Activated CD4-positive, alpha-beta T cell treated with anti-CD3 and anti-CD28 coated beads, Interleukin-2, amount 10 ng/mL, durations not matched to agents 24 days and 14 days (primary cell): ENCODE measurements at regions of chr11 and their contacts with region 1.

Region 1: GRCh38 chr11:126355324-126355925 is at the start of gene ST3GAL4:
- DNase-seq: peak; percentile 91
- H3K4me3 Mint-ChIP-seq: peak within 1 kb of the TSS; percentile 96
- H3K27ac Mint-ChIP-seq: peak within 1 kb of the TSS; percentile 93
- H3K4me1 Mint-ChIP-seq: peaks cover 35% of the 10 kb centered on the region
- H3K27me3 Mint-ChIP-seq: no peaks in the 10 kb centered on the region
- total RNA-seq, gene ST3GAL4: 12.3 and 13.3 TPM in 2 replicates

Region 2: DNA sequence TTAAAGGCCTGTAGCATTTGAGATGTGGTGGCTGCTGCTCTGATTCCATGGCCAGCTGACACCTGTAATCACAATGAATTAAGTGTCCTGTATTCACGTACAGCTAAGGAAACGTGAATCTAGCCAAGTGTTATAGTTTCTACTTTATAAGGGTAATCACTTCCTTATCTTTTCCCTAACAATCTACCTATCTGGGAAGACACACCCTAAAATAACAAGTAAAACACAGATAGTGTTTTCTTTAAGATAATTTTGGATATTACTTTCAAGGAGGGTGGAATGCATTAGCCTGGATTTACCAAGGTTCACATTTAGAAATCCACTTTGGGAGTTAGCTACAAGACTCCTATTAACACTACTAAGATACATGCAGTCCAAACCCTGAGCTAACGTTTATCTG is 304.3 kb before region 1 on chr11:
- intact Hi-C with region 1: no loop called
- DNase-seq: no peak
- H3K4me3 Mint-ChIP-seq: no peak overlapping the region
- H3K27ac Mint-ChIP-seq: no peak overlapping the region
- H3K4me1 Mint-ChIP-seq: no peaks in the 10 kb centered on the region
- H3K27me3 Mint-ChIP-seq: peaks cover 11% of the 10 kb centered on the region

Region 3: DNA sequence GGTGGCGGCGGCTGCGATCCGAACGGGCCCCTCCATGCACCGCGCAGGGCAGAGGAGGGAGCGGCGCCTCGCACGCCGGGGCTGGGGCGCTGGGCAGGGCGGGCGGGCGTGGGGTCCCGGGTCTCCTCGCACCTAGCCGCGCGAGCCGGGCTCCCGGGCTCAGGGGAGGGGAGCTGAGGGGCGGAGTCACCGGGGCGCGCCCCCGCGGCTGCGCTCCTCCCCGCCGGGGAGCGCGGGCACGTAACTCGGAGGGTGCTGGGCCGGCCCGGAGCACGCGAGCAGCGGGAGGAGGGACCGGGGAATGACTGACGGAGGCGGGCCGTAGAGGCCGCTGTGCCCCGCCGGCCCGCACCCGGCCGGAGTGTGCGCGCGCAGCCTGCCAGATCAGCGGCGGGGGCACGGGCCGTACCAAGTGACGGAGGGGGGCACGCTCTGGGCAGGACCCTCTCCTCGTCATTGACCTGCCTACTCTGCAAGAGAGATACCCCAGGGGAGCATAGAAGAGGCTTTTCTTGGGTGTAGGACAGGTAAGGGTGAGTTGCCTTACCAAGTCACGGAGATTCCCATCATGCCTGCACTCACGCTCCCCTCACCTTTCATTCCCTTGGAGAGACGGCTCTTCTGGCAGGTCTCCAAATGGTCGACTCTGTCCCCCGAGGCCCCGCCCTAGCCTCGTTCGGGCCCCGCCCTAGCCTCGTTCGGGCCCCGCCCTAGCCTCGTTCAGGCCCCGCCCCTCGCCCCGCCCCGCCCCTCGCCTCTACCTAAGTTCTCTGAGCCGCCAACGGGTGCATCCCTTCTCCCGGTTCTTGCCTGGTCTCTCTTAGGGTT is 292.5 kb before region 1 on chr11 and contains the start of gene CDON:
- intact Hi-C with region 1: loop called (anchors 2 kb)
- DNase-seq: peak; percentile 98
- H3K4me3 Mint-ChIP-seq: peak within 1 kb of the TSS; percentile 80
- H3K27ac Mint-ChIP-seq: peak within 1 kb of the TSS; percentile 97
- H3K4me1 Mint-ChIP-seq: peaks cover 5% of the 10 kb centered on the region
- H3K27me3 Mint-ChIP-seq: peaks cover 46% of the 10 kb centered on the region
- total RNA-seq, gene CDON: 1.9 TPM in 2 replicates

Region 4: DNA sequence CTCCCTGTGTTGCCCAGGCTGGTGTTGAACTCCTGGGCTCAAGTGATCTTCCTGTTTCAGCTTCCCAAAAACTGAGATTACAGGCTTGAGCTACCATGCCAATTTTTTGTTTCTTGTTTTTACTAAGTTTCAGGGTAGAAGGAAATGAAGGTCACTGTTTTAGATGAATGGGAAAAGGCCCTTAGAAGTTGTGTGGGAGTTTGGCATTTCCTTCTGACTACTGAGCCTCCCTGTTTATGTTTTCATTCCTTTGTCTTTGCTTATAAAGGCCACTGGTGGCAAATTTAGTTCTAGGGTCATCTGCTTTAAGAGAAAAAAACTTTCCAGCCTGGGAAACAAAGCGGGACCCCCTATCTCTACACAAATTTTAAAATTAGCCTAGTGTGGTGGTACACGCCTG is 108.8 kb before region 1 on chr11:
- intact Hi-C with region 1: no loop called
- DNase-seq: no peak
- H3K4me3 Mint-ChIP-seq: no peak overlapping the region
- H3K27ac Mint-ChIP-seq: no peak overlapping the region
- H3K4me1 Mint-ChIP-seq: no peaks in the 10 kb centered on the region
- H3K27me3 Mint-ChIP-seq: no peaks in the 10 kb centered on the region

Region 5: DNA sequence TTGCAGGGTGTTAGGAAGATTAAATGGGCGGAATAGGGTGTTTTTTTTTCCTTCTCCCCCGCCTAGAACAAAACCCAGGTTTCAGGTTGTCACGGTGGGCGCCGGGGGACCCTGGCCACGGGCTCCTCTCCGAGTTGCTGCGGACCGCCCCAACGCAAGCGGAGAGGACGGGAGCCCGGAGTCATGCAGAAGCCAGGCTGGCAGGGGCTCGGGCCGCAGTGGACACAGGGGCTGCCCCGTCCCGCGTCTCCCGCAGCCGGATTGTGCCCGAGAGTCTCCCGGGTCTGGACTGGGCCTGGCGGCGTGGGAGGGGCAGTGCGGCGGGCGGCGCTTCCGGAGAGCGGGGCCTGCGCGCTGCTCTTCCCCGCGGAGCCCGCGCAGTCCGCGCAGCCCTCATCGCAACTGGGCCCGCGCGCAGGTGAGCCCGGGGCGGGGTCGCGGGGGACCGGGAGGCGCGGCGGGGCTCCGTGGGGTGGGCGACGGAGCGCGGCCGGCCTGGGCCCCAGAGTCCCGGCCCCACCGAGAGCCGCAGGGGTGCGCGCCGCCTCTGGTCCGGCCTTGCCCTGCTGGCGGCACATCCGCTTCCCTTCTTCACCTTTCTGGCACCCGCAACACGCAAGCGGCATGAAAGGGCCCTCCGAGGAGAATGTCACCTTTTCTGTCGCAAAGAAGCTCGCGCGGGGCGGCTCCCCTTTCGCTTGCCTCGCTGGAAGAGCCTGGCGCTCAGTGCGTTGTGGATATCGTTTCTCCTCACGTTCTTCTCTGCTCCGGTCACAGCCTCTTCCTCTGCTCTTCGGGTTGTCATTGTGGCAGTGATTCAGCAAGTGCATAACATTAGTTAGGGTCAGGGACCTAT is 72.5 kb before region 1 on chr11 and contains the start of gene TIRAP:
- intact Hi-C with region 1: loop called (anchors 2 kb)
- DNase-seq: peak; percentile 90
- H3K4me3 Mint-ChIP-seq: peak within 1 kb of the TSS; percentile 98
- H3K27ac Mint-ChIP-seq: peak within 1 kb of the TSS; percentile 94
- H3K4me1 Mint-ChIP-seq: peaks cover 31% of the 10 kb centered on the region
- H3K27me3 Mint-ChIP-seq: no peaks in the 10 kb centered on the region
- total RNA-seq, gene TIRAP: 11.4 and 12.0 TPM in 2 replicates

Region 6: GRCh38 chr11:126303623-126304456 is 51.6 kb before region 1 on chr11 and contains the start of gene DCPS:
- intact Hi-C with region 1: loop called (anchors 1 kb)
- DNase-seq: peak; percentile 97
- H3K4me3 Mint-ChIP-seq: peak within 1 kb of the TSS; percentile 91
- H3K27ac Mint-ChIP-seq: peak within 1 kb of the TSS; percentile 97
- H3K4me1 Mint-ChIP-seq: peaks cover 19% of the 10 kb centered on the region
- H3K27me3 Mint-ChIP-seq: no peaks in the 10 kb centered on the region
- total RNA-seq, gene DCPS: 36.0 and 40.2 TPM in 2 replicates

Region 7: DNA sequence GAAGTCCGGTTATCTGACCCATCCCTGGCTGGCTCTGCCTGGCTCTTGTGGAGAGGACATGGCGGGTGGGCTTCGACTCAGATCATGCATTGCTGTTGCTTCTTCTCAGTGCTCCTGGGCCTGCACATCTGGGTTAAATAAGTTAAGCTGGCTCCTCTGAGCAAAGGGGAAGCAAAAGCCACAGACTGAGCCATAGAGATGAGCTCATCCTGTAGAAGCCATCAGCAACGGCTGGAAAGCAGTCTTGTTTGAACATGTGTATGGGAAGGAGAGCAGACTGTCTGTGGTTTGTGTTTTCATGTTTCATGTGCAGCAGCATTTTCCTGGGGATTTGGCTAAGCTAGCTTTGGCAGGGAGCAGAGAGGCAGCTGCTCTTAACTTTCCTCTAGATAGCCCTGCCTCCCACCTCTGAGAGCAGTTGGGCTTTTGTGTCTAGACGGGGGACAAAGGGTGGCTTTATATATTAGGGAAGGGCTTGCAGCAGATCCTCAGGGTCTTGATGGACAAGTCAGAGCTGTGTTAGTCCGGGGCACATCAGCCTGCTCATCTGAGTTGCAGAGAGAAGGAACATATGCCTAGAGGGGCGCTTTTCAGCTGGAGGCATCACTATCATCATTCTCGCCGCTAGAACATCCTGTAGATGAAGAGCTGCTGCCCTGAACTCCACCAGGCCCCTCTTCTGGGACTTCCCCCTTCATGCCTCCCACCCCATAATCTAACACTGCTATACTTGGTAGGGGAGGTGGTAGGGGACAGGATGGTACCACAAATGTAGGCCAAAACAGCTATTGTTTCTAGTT is 36.7 kb before region 1 on chr11:
- intact Hi-C with region 1: loop called (anchors 5 kb)
- DNase-seq: peak; percentile 80
- H3K4me3 Mint-ChIP-seq: peak overlapping the region; percentile 56
- H3K27ac Mint-ChIP-seq: peak overlapping the region; percentile 80
- H3K4me1 Mint-ChIP-seq: peaks cover 37% of the 10 kb centered on the region
- H3K27me3 Mint-ChIP-seq: no peaks in the 10 kb centered on the region

Region 8: GRCh38 chr11:126416542-126417090 is 61.2 kb after region 1 on chr11:
- intact Hi-C with region 1: loop called (anchors 2 kb)
- DNase-seq: peak; percentile 90
- H3K4me3 Mint-ChIP-seq: peak overlapping the region; percentile 70
- H3K27ac Mint-ChIP-seq: peak overlapping the region; percentile 64
- H3K4me1 Mint-ChIP-seq: peaks cover 17% of the 10 kb centered on the region
- H3K27me3 Mint-ChIP-seq: peaks cover 10% of the 10 kb centered on the region

Region 9: DNA sequence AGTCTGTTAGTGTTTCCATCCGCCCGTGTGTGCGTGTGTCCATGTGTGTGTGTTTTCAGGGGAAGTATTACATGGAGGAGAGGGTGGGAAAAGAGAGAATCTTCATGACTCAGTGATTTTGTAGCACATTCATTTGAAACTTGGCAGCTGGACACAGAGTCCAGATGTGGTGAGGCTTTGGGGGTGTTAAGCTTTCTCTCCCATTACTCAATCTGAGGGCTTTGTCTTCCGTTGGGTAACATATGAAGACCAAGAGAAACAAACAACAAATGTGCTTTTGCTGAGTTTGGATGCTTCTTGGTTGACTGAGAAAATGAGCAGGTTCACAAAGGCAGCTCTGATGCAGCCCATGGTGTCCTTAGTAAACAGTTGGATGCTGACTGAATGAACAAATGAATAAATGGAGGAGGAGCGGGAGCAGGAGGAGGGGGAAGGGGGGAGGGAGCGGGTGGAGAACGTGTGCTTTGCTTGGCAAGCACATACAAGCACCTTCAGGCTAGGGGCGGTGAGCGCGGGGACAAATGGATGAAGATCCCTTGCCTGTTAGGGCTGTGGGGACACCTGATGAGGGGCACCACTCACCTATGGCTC is 104.4 kb after region 1 on chr11:
- intact Hi-C with region 1: no loop called
- DNase-seq: no peak
- H3K4me3 Mint-ChIP-seq: no peak overlapping the region
- H3K27ac Mint-ChIP-seq: no peak overlapping the region
- H3K4me1 Mint-ChIP-seq: peaks cover 3% of the 10 kb centered on the region
- H3K27me3 Mint-ChIP-seq: no peaks in the 10 kb centered on the region

Region 10: DNA sequence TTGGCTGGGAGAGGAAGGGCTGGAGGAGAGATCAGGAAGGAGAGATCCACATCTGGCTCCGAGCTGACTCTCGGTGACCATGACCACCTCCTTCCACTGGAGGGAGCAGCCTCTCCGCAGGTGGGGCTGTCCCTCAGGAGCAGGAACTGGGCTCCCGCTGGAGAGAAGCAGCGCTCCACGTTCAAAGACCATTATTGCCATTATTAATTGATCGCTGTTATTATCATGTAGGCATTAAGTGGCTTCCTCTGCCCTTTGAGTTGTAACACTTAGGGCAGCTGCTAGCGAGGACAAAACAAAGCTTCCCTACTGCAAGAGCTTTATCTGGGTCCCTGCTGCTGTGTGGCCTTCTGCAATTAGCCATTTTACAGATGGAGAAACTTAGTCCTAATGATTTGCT is 251.9 kb after region 1 on chr11:
- intact Hi-C with region 1: no loop called
- DNase-seq: peak; percentile 58
- H3K4me3 Mint-ChIP-seq: no peak overlapping the region
- H3K27ac Mint-ChIP-seq: no peak overlapping the region
- H3K4me1 Mint-ChIP-seq: no peaks in the 10 kb centered on the region
- H3K27me3 Mint-ChIP-seq: no peaks in the 10 kb centered on the region